Transverse colon (tissue), 4 donors: ENCODE measurements at regions of chr15 and their contacts with region 1.

Region 1: DNA sequence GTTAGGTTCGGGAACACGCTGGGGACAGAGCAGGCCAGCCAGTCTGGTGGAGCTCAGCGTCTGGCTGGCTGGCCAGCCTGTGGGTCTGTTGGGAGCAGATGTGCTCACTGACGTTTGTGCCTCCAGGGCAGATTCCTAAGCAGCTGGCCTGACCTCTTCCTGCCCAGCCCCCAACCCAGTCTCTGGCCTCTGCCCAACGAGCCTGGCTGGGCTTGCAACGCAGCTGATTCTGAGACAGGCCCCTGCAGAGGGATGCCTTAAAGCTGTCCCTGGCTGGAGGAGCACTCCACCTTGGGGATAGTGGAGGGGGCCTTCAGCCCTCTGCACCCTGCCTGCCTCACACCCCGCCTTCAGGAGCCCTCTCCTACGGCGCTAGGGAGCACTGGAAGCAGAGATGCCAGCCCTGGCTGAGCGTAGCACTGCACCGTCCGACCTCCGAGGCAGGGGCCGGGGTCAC is 46.0 kb downstream of the KLF13 start:
- DNase-seq: no peak
- H3K4me3 ChIP-seq: no peak overlapping the region
- H3K27ac ChIP-seq: peak overlapping the region; percentile 60 to 75 (median 69)
- H3K4me1 ChIP-seq: peaks cover 18 to 75% (median 47%) of the 10 kb centered on the region in 4 donors
- H3K27me3 ChIP-seq: no peaks in the 10 kb centered on the region
- CTCF ChIP-seq: no peak
- EP300 ChIP-seq: no peak
- POLR2A ChIP-seq: no peak

Region 2: DNA sequence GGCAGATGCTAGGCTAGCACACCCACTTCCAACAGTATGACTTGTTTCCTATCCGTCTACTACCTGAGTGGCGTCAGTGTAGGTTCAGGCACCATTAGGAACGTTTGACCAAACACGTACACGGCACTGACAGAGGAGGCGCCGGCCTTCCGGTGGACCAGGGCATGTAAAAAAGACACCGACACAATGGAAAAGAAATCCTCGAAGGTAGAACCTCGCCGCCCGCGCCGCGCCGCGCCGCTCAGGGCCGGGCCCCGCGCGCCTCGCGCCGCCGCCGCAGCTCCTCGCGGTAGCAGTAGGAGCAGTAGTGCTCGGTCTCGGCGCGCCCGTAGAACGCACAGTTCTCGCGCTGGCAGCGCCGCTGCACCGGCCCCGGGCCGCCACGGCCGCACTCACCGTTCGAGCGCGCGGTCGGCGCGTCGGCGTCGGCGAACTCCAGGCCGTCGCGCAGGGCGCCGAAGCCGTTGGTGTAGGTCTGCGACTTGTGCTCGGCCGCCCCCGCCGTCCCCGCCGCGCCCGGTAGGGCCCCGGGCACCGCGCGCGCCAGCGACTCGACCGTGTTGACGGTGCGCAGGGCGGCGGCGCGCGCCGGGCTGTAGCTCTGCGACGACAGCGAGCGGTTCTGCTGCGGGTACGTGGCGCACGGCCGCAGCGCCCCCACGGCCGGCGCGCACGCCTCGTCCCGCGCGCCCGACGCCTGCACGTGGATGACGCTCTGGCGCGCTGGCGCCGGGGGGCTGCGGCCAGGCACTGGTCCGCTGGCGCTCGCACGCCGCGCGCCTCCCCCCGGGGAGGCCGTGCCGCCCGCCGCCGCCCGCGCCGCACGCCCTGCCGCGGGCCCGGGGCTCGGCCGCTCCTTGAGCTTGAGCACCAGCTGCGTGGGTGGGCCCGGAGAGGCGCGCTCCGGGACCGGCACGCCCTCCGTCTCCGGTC is 110.7 kb after region 1 on chr15:
- in situ Hi-C with region 1: no loop called
- intact Hi-C with region 1: loop called (anchors 5 kb)
- DNase-seq: no peak
- H3K4me3 ChIP-seq: peak overlapping the region in 3 of 4 donors; percentile 18 to 38 (median 28)
- H3K27ac ChIP-seq: peak overlapping the region in 1 of 4 donors; percentile 34
- H3K4me1 ChIP-seq: peaks cover 2 to 13% (median 3%) of the 10 kb centered on the region in 4 donors
- H3K27me3 ChIP-seq: peaks cover 25% of the 10 kb centered on the region
- CTCF ChIP-seq: no peak
- EP300 ChIP-seq: no peak
- POLR2A ChIP-seq: no peak